B cell (primary cell): ENCODE measurements at regions of chr5 and their contacts with region 1.

Region 1: DNA sequence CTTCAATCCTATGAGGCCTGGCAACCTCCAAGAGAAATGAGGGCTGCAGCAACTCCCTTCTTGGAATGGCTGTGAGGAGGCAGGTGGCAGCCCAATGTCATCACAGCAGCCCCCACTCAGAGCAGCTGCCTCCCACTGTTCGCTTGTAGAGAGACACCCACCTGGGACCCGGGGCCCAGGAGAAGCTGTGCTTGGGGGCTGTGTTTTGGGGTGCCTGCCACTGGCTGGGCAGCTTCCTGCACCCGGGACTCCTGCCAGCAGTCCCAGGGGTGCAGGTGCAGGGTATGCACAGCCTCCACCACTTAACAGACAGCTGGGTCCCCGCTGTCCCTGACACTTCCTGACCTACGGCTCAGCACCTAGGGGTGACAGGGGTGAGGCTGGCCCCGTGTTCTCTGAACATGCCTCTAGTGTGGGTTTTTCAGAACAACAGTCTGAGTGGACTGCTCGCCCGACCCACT is 26.2 kb downstream of the NIPAL4 start:
- DNase-seq: peak; percentile 66
- ATAC-seq: peak; percentile 46
- H3K4me3 ChIP-seq: peak overlapping the region in 1 of 5 experiments; percentile 20
- H3K4me3 Mint-ChIP-seq: peak overlapping the region; percentile 65
- H3K27ac ChIP-seq: peak overlapping the region; percentile 94 to 100
- H3K27ac Mint-ChIP-seq: peak overlapping the region; percentile 95
- H3K4me1 ChIP-seq: peaks cover 66 to 77% of the 10 kb centered on the region in 2 donors
- H3K4me1 Mint-ChIP-seq: peaks cover 82% of the 10 kb centered on the region
- H3K27me3 ChIP-seq: no peaks in the 10 kb centered on the region
- H3K27me3 Mint-ChIP-seq: no peaks in the 10 kb centered on the region
- CTCF ChIP-seq: no peak

Region 2: GRCh38 chr5:157471709-157472108 is 14.5 kb before region 1 on chr5:
- CTCF ChIA-PET with region 1: interaction called, 21 read pairs
- POLR2A ChIA-PET with region 1: no interaction called
- intact Hi-C with region 1: no loop called
- DNase-seq: peak; percentile 47
- ATAC-seq: peak; percentile 67
- H3K4me3 ChIP-seq: no peak overlapping the region
- H3K4me3 Mint-ChIP-seq: no peak overlapping the region
- H3K27ac ChIP-seq: peak overlapping the region in 1 of 2 donors; percentile 24
- H3K27ac Mint-ChIP-seq: peak overlapping the region; percentile 68
- H3K4me1 ChIP-seq: peaks cover 5 to 29% of the 10 kb centered on the region in 2 donors
- H3K4me1 Mint-ChIP-seq: peaks cover 51% of the 10 kb centered on the region
- H3K27me3 ChIP-seq: no peaks in the 10 kb centered on the region
- H3K27me3 Mint-ChIP-seq: no peaks in the 10 kb centered on the region
- CTCF ChIP-seq: peak; percentile 48

Region 3: DNA sequence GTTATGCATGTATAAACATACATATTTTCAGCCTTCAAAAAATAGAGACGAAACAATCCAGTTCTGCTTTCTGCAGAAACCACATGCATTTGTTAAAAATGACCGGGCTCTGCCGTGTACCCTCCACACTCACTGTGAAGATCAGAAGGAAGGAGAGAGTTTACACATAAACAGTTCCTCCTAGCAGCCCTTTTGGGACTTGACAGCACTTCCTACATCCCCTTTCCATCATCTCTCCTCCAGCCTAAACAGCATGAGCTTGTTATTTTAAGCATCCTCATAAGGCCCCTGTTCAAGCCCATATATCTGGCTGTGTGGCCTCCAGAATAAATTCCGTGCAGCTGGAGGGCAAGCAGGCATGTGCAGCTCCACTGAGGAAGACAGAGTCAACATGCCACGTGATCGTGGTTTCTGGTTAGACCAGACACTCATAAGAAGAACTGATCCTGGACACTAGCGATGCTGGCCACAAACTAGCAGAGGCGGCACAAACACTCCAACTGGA is 15.9 kb after region 1 on chr5:
- CTCF ChIA-PET with region 1: interaction called, 8 read pairs
- POLR2A ChIA-PET with region 1: interaction called, 41 read pairs
- intact Hi-C with region 1: loop called (anchors 1 kb)
- DNase-seq: peak; percentile 87
- ATAC-seq: peak; percentile 76
- H3K4me3 ChIP-seq: no peak overlapping the region
- H3K4me3 Mint-ChIP-seq: peak overlapping the region; percentile 16
- H3K27ac ChIP-seq: peak overlapping the region; percentile 83 to 98
- H3K27ac Mint-ChIP-seq: peak overlapping the region; percentile 95
- H3K4me1 ChIP-seq: peaks cover 84 to 91% of the 10 kb centered on the region in 2 donors
- H3K4me1 Mint-ChIP-seq: peaks cover 87% of the 10 kb centered on the region
- H3K27me3 ChIP-seq: no peaks in the 10 kb centered on the region
- H3K27me3 Mint-ChIP-seq: no peaks in the 10 kb centered on the region
- CTCF ChIP-seq: no peak

Region 4: DNA sequence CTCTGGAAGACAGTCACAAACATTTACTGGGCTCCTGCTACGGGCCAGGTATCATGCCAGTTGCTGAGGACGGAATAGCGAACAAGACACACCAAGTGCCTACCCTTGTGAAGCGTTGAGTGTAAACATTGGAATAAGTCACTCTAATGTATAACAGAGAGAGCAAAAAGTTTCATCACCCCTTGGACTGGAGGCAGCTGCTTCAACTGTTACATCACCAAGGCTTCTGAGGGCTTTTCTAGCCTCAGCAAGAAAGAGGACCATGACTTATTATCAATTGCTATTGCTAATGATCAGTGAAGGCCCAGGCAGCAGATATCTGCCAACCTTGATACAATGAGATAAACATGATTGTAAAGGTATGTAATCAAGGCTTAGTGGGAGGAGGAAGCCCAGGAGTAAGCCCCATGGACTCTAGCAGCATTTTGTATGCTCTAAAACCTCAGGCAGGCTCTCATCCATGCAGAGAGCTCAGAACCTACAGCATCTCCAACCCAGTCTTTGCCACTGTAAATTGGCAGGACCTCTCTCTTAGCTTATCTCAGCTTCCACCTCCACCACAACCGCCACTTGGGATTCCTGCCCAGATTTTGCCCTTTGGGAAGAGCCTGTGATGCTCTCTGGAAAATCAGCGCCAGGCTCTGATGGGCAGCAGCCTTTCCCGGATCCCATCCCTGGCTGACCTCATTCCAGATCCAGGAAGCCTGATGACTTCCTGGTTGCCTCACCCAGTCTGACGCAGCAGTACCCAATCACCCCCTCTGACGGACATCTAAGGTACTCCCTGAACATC is 34.9 kb after region 1 on chr5:
- CTCF ChIA-PET with region 1: interaction called, 3 read pairs
- POLR2A ChIA-PET with region 1: no interaction called
- intact Hi-C with region 1: loop called (anchors 5 kb)
- DNase-seq: no peak
- ATAC-seq: no peak
- H3K4me3 ChIP-seq: no peak overlapping the region
- H3K4me3 Mint-ChIP-seq: peak overlapping the region; percentile 34
- H3K27ac ChIP-seq: peak overlapping the region in 1 of 2 donors; percentile 74
- H3K27ac Mint-ChIP-seq: peak overlapping the region; percentile 92
- H3K4me1 ChIP-seq: peaks cover 43 to 62% of the 10 kb centered on the region in 2 donors
- H3K4me1 Mint-ChIP-seq: peaks cover 69% of the 10 kb centered on the region
- H3K27me3 ChIP-seq: no peaks in the 10 kb centered on the region
- H3K27me3 Mint-ChIP-seq: no peaks in the 10 kb centered on the region
- CTCF ChIP-seq: no peak

Region 5: DNA sequence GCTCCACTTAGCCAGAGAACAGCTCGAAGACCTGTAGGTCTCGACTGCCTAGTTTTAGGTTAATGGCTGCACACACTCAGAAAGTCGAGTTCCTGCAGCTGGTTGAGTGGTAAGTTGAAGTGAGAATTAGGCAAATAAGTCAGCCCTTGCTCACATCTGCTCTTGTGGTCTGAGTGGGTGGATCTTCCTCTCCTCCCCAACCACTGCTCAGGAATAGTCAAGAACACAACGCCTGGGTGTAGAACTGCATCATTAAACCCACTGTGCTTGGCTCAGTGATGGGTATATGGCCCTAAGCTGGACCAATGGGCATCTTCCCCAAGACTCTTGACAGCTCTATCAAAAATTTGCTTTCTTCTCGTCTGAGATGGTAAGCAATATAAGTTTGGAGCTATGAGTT is 110.2 kb after region 1 on chr5:
- CTCF ChIA-PET with region 1: interaction called, 9 read pairs
- POLR2A ChIA-PET with region 1: interaction called, 3 read pairs
- intact Hi-C with region 1: loop called (anchors 5 kb)
- DNase-seq: peak; percentile 87
- ATAC-seq: peak; percentile 73
- H3K4me3 ChIP-seq: peak overlapping the region in 1 of 5 experiments; percentile 31
- H3K4me3 Mint-ChIP-seq: peak overlapping the region; percentile 45
- H3K27ac ChIP-seq: peak overlapping the region; percentile 92 to 97
- H3K27ac Mint-ChIP-seq: peak overlapping the region; percentile 85
- H3K4me1 ChIP-seq: peaks cover 92 to 95% of the 10 kb centered on the region in 2 donors
- H3K4me1 Mint-ChIP-seq: peaks cover 93% of the 10 kb centered on the region
- H3K27me3 ChIP-seq: no peaks in the 10 kb centered on the region
- H3K27me3 Mint-ChIP-seq: no peaks in the 10 kb centered on the region
- CTCF ChIP-seq: no peak

Region 6: DNA sequence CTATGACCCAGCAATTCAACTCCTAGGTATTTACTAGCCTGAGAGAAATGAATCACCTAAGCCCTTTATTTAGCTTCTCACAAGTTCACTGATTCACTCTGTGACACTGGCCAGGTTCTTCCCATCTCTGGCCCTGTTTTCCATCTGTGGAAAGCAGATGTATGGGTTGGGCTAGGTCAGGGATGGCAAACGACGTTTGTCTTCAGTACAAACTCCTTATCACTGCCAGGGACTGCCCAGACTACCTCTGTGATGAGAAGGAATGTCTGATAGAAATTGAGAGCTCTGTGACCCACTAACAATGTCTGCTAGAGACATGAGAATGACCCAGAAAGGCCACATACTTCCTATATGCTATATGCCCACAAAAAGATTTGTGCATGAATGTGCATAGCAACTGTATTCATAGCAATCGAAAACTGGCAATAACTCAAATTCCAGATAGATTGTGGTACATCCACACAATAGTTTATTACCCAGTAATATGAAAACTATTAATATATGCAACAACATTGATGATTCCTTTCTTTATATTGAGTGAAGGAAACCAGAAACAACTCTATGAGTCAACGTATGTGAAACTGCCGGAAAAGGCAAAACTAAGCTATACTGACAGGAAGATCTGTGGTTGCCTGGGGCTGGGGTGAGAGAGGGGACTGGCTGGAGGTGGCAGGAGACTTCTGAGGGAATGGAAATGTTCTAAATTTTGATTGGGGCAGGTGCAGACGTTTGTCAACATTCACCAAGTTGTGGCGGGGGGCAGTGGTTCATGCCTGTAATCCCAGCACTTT is 121.3 kb after region 1 on chr5:
- CTCF ChIA-PET with region 1: no interaction called
- POLR2A ChIA-PET with region 1: no interaction called
- intact Hi-C with region 1: no loop called
- DNase-seq: no peak
- ATAC-seq: peak; percentile 44
- H3K4me3 ChIP-seq: no peak overlapping the region
- H3K4me3 Mint-ChIP-seq: peak overlapping the region; percentile 42
- H3K27ac ChIP-seq: peak overlapping the region in 1 of 2 donors; percentile 31
- H3K27ac Mint-ChIP-seq: peak overlapping the region; percentile 80
- H3K4me1 ChIP-seq: peaks cover 53 to 59% of the 10 kb centered on the region in 2 donors
- H3K4me1 Mint-ChIP-seq: peaks cover 60% of the 10 kb centered on the region
- H3K27me3 ChIP-seq: no peaks in the 10 kb centered on the region
- H3K27me3 Mint-ChIP-seq: no peaks in the 10 kb centered on the region
- CTCF ChIP-seq: no peak

Region 7: GRCh38 chr5:157731272-157732129 is 245.2 kb after region 1 on chr5 and contains the start of gene THG1L:
- CTCF ChIA-PET with region 1: no interaction called
- POLR2A ChIA-PET with region 1: no interaction called
- intact Hi-C with region 1: loop called (anchors 2 kb)
- DNase-seq: peak; percentile 93
- ATAC-seq: peak; percentile 84
- H3K4me3 ChIP-seq: peak within 1 kb of the TSS; percentile 67 to 94 (median 93)
- H3K4me3 Mint-ChIP-seq: peak within 1 kb of the TSS; percentile 98
- H3K27ac ChIP-seq: peak within 1 kb of the TSS; percentile 92 to 94
- H3K27ac Mint-ChIP-seq: peak within 1 kb of the TSS; percentile 99
- H3K4me1 ChIP-seq: peaks cover 21 to 26% of the 10 kb centered on the region in 2 donors
- H3K4me1 Mint-ChIP-seq: peaks cover 30% of the 10 kb centered on the region
- H3K27me3 ChIP-seq: no peaks in the 10 kb centered on the region
- H3K27me3 Mint-ChIP-seq: no peaks in the 10 kb centered on the region
- CTCF ChIP-seq: no peak
- total RNA-seq, gene THG1L: 14.1 and 14.6 TPM in 2 replicates